ENCODE measurements at regions of chr12 and their contacts with region 1.

Region 1: GRCh38 chr12:20646239-20646827 is 48.8 kb upstream of the SLCO1C1 start:
- DNase-seq: peak; percentile 53
- ATAC-seq: peak; percentile 86
- H3K4me3 ChIP-seq: no peak overlapping the region
- H3K27ac ChIP-seq: no peak overlapping the region
- H3K4me1 ChIP-seq: no peaks in the 10 kb centered on the region
- H3K27me3 ChIP-seq: no peaks in the 10 kb centered on the region
- CTCF ChIP-seq: peak; percentile 48 to 76 (median 57); a peak in 5 of 6 replicates
- POLR2A ChIP-seq: no peak
- RAD21 ChIP-seq: peak; percentile 83

Region 2: GRCh38 chr12:20492251-20492728 is 154.0 kb before region 1 on chr12:
- CTCF ChIA-PET with region 1: no interaction called
- POLR2A ChIA-PET with region 1: no interaction called
- RAD21 ChIA-PET with region 1: no interaction called
- intact Hi-C with region 1: no loop called
- DNase-seq: peak; percentile 67
- ATAC-seq: peak; percentile 95
- H3K4me3 ChIP-seq: peak overlapping the region; percentile 27 to 45
- H3K27ac ChIP-seq: no peak overlapping the region
- H3K4me1 ChIP-seq: peaks cover 0 to 23% of the 10 kb centered on the region in 2 experiments; a peak in 3 of 4 replicates
- H3K27me3 ChIP-seq: no peaks in the 10 kb centered on the region
- CTCF ChIP-seq: no peak
- POLR2A ChIP-seq: no peak
- RAD21 ChIP-seq: no peak

Region 3: GRCh38 chr12:20631711-20632110 is 14.6 kb before region 1 on chr12:
- CTCF ChIA-PET with region 1: no interaction called
- POLR2A ChIA-PET with region 1: no interaction called
- RAD21 ChIA-PET with region 1: no interaction called
- intact Hi-C with region 1: no loop called
- DNase-seq: no peak
- ATAC-seq: no peak
- H3K4me3 ChIP-seq: no peak overlapping the region
- H3K27ac ChIP-seq: no peak overlapping the region
- H3K4me1 ChIP-seq: peaks cover 6 to 7% of the 10 kb centered on the region in 2 experiments; a peak in 3 of 4 replicates
- H3K27me3 ChIP-seq: no peaks in the 10 kb centered on the region
- CTCF ChIP-seq: no peak
- POLR2A ChIP-seq: no peak
- RAD21 ChIP-seq: no peak

Region 4: GRCh38 chr12:20798561-20798960 is 152.2 kb after region 1 on chr12:
- CTCF ChIA-PET with region 1: no interaction called
- POLR2A ChIA-PET with region 1: no interaction called
- RAD21 ChIA-PET with region 1: no interaction called
- intact Hi-C with region 1: loop called (anchors 1 kb)
- DNase-seq: peak; percentile 7
- ATAC-seq: peak; percentile 69
- H3K4me3 ChIP-seq: no peak overlapping the region
- H3K27ac ChIP-seq: no peak overlapping the region
- H3K4me1 ChIP-seq: no peaks in the 10 kb centered on the region
- H3K27me3 ChIP-seq: no peaks in the 10 kb centered on the region
- CTCF ChIP-seq: peak; percentile 29 to 48 (median 35); a peak in 4 of 6 replicates
- POLR2A ChIP-seq: no peak
- RAD21 ChIP-seq: peak; percentile 63

Region 5: GRCh38 chr12:20830456-20830855 is 184.1 kb after region 1 on chr12:
- CTCF ChIA-PET with region 1: no interaction called
- POLR2A ChIA-PET with region 1: no interaction called
- RAD21 ChIA-PET with region 1: no interaction called
- intact Hi-C with region 1: no loop called
- DNase-seq: no peak
- ATAC-seq: no peak
- H3K4me3 ChIP-seq: no peak overlapping the region
- H3K27ac ChIP-seq: peak overlapping the region; percentile 6; the same call in 1 of the 2 replicates
- H3K4me1 ChIP-seq: peaks cover 0 to 7% of the 10 kb centered on the region in 2 experiments; a peak in 1 of 4 replicates
- H3K27me3 ChIP-seq: no peaks in the 10 kb centered on the region
- CTCF ChIP-seq: no peak
- POLR2A ChIP-seq: no peak
- RAD21 ChIP-seq: no peak

Region 6: GRCh38 chr12:21065845-21066244 is 419.5 kb after region 1 on chr12:
- CTCF ChIA-PET with region 1: interaction called, 3 read pairs
- POLR2A ChIA-PET with region 1: no interaction called
- RAD21 ChIA-PET with region 1: no interaction called
- intact Hi-C with region 1: loop called (anchors 1 kb)
- DNase-seq: peak; percentile 18
- ATAC-seq: peak; percentile 76
- H3K4me3 ChIP-seq: no peak overlapping the region
- H3K27ac ChIP-seq: no peak overlapping the region
- H3K4me1 ChIP-seq: no peaks in the 10 kb centered on the region
- H3K27me3 ChIP-seq: no peaks in the 10 kb centered on the region
- CTCF ChIP-seq: peak; percentile 54 to 62 (median 59); a peak in 5 of 6 replicates
- POLR2A ChIP-seq: no peak
- RAD21 ChIP-seq: peak; percentile 67

Region 7: GRCh38 chr12:21169878-21170472 is 523.6 kb after region 1 on chr12:
- CTCF ChIA-PET with region 1: no interaction called
- POLR2A ChIA-PET with region 1: no interaction called
- RAD21 ChIA-PET with region 1: no interaction called
- intact Hi-C with region 1: loop called (anchors 2 kb)
- DNase-seq: peak; percentile 37
- ATAC-seq: peak; percentile 74
- H3K4me3 ChIP-seq: no peak overlapping the region
- H3K27ac ChIP-seq: no peak overlapping the region
- H3K4me1 ChIP-seq: no peaks in the 10 kb centered on the region
- H3K27me3 ChIP-seq: no peaks in the 10 kb centered on the region
- CTCF ChIP-seq: peak; percentile 73 to 94 (median 74)
- POLR2A ChIP-seq: no peak
- RAD21 ChIP-seq: peak; percentile 83